Keratinocyte (primary cell): ENCODE measurements at regions of chr16 and their contacts with region 1.

Region 1: GRCh38 chr16:55257966-55258613 is 65.9 kb upstream of the IRX6 start:
- DNase-seq: no peak
- H3K4me3 ChIP-seq: no peak overlapping the region
- H3K27ac ChIP-seq: no peak overlapping the region
- H3K4me1 ChIP-seq: no peaks in the 10 kb centered on the region
- H3K27me3 ChIP-seq: no peaks in the 10 kb centered on the region
- CTCF ChIP-seq: peak; percentile 93 to 95 (median 93)

Region 2: DNA sequence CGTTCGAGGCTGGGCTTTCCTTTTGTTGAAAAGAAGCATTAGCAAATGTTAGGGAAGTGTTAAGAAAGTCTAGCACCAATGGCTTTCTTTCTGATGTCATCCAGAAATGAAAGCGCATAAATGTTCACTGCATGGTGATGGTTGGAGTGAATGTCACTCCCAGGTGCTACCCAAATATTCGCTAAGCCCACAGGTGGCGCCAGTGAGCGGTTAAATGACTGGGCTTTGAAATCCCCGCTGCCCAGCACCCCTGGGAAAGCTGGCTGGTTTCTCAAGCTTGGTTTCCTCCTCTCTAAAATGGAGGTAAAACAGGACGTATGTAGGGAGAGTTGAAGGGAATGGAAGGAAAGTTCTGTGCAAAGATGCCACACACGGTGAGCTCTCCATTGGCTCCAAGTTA is 223.1 kb before region 1 on chr16:
- dilution Hi-C with region 1: loop called (anchors 25 kb)
- DNase-seq: no peak
- H3K4me3 ChIP-seq: no peak overlapping the region
- H3K27ac ChIP-seq: no peak overlapping the region
- H3K4me1 ChIP-seq: peaks cover 14% of the 10 kb centered on the region
- H3K27me3 ChIP-seq: no peaks in the 10 kb centered on the region
- CTCF ChIP-seq: peak; percentile 72 to 75 (median 74)